Sigmoid colon (tissue), 7 donors: ENCODE measurements at regions of chr9 and their contacts with region 1.

Region 1: DNA sequence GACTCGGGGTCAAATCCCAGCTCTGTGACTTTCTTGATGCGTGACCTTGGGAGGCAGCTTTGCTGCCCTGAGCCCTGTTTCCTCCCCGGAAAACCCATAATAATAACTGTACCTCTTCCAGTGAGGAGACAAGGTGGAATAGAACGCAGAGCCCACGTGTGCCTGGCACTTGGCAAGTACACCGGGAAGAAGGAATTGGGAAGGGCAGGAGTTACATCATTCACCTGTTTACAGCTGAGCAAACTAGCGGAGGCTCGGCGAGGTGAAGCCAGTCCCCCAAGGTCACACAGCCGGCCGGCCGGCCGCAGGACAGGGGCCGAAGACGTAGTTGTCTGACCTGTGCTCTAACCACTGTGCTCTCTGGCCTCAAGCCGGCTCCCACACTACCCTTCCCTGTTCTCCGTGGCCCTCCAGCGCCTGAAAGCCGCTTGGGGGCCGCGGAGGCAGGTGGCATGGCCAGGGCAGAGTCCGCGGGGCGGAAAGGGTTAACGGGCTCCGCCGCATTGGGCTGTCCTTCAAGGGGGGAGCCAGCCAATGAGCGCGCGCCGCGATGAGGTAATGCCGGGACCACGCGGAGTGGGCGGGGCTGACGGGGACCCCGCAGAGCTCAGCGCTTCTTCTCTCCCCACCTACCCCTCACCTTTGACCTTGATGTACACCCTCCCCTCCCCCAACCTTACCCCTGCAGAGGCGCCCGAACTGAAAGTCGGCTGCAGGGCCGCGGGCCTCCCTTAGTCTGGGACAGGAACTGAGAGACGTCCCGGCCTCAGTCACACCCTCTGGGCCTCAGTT is 125.2 kb downstream of the C9orf50 start:
- DNase-seq: peak; percentile 97
- H3K4me3 ChIP-seq: peak overlapping the region; percentile 61 to 71 (median 62)
- H3K27ac ChIP-seq: peak overlapping the region; percentile 84 to 99 (median 99)
- H3K4me1 ChIP-seq: peaks cover 0 to 95% (median 78%) of the 10 kb centered on the region in 4 donors
- H3K27me3 ChIP-seq: no peaks in the 10 kb centered on the region
- CTCF ChIP-seq: no peak
- EP300 ChIP-seq: no peak
- POLR2A ChIP-seq: peak in 1 of 2 donors; percentile 42

Region 2: DNA sequence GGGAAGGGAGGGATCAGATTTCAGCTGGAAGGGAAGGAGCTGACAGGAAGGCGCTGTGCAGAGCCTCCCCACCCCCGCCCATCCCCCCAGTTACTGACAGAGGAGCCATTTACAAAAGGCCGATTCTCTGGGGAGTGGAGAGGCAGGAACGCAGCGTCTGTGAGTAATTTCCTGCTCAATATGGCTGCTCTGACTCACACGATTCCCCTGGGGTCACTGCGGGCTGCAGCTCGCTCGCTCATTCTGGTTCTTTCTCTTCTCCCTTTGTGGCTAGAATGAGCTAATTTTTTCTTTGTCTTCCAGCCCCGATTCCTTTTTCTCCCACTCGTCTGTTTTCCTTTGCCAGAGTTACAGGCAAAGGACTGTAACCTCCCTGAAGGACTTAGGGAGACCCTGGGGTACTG is 355.7 kb before region 1 on chr9:
- intact Hi-C with region 1: loop called (anchors 2 kb)
- DNase-seq: peak; percentile 98
- H3K4me3 ChIP-seq: peak overlapping the region; percentile 36 to 59 (median 50)
- H3K27ac ChIP-seq: peak overlapping the region; percentile 97 to 100 (median 99)
- H3K4me1 ChIP-seq: peaks cover 0 to 73% (median 64%) of the 10 kb centered on the region in 4 donors
- H3K27me3 ChIP-seq: no peaks in the 10 kb centered on the region
- CTCF ChIP-seq: no peak
- EP300 ChIP-seq: peak in 2 of 4 donors; percentile 71 to 76
- POLR2A ChIP-seq: peak; percentile 55 to 62

Region 3: DNA sequence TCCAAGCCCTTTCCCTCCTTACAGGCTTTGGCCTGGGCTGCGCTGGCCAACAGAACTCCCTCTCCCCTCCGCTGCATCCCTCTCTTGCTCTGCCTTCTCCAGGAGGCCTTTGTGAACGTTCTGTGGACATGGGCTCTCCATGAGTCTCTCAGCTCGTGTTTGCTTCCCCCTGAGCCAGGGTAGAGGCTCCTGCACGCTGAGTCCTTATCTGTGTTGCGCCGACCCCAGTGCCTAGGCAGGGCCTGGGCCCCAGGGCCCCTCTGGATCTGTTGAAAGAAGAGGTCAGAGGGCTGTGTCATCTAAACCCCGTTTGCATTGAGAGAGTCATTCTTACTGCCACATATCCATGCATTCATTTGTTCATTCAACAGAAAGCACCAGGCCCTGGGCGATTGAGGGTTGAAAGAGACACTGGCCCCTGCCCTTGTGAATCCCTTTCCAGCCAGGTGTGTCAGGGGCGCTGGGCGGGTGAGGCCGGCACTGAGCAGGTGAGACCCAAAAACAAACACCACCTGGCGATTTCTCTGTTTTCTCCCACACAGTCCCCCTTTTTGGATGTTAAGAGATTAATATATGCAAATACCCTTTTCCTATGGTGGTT is 206.5 kb before region 1 on chr9:
- intact Hi-C with region 1: no loop called
- DNase-seq: peak; percentile 43
- H3K4me3 ChIP-seq: no peak overlapping the region
- H3K27ac ChIP-seq: no peak overlapping the region
- H3K4me1 ChIP-seq: no peaks in the 10 kb centered on the region
- H3K27me3 ChIP-seq: no peaks in the 10 kb centered on the region
- CTCF ChIP-seq: no peak
- EP300 ChIP-seq: no peak
- POLR2A ChIP-seq: no peak

Region 4: GRCh38 chr9:129320575-129321263 is 175.0 kb before region 1 on chr9:
- intact Hi-C with region 1: loop called (anchors 5 kb)
- DNase-seq: peak; percentile 80
- H3K4me3 ChIP-seq: peak overlapping the region in 3 of 4 donors; percentile 32 to 51 (median 49)
- H3K27ac ChIP-seq: peak overlapping the region; percentile 75 to 87 (median 82)
- H3K4me1 ChIP-seq: peaks cover 0 to 49% (median 43%) of the 10 kb centered on the region in 4 donors
- H3K27me3 ChIP-seq: no peaks in the 10 kb centered on the region
- CTCF ChIP-seq: peak in 3 of 4 experiments; percentile 13 to 27 (median 23)
- EP300 ChIP-seq: no peak
- POLR2A ChIP-seq: peak in 1 of 2 donors; percentile 32

Region 5: GRCh38 chr9:129460323-129461261 is 35.1 kb before region 1 on chr9:
- intact Hi-C with region 1: loop called (anchors 5 kb)
- DNase-seq: peak; percentile 99
- H3K4me3 ChIP-seq: peak overlapping the region; percentile 19 to 46 (median 46)
- H3K27ac ChIP-seq: peak overlapping the region; percentile 95 to 100 (median 98)
- H3K4me1 ChIP-seq: peaks cover 0 to 68% (median 54%) of the 10 kb centered on the region in 4 donors
- H3K27me3 ChIP-seq: no peaks in the 10 kb centered on the region
- CTCF ChIP-seq: peak in 1 of 4 experiments; percentile 23
- EP300 ChIP-seq: peak in 2 of 4 donors; percentile 53 to 72
- POLR2A ChIP-seq: peak in 1 of 2 donors; percentile 42

Region 6: DNA sequence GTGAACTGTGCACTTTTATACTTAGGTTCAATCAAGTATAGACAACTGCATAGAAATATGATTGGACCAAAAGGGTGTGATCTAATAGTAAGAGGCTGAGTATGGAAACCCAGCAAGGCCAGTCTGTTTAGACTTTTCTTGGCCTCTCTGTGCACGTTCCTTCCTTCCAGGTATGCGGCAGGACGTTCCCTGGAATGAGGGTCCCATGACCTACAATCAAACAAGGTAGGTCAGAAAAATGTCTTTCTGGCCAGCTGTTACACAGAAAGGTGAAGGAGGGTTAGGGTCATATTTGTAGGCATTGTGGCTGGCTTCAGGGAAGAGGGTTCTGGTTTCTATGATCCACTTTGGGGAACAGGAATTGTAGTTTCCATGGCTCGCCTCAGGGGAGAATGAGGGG is 40.3 kb after region 1 on chr9:
- intact Hi-C with region 1: no loop called
- DNase-seq: peak; percentile 8
- H3K4me3 ChIP-seq: no peak overlapping the region
- H3K27ac ChIP-seq: no peak overlapping the region
- H3K4me1 ChIP-seq: no peaks in the 10 kb centered on the region
- H3K27me3 ChIP-seq: no peaks in the 10 kb centered on the region
- CTCF ChIP-seq: no peak
- EP300 ChIP-seq: no peak
- POLR2A ChIP-seq: no peak

Region 7: GRCh38 chr9:129569502-129570449 is 74.0 kb after region 1 on chr9:
- intact Hi-C with region 1: loop called (anchors 2 kb)
- DNase-seq: no peak
- H3K4me3 ChIP-seq: peak overlapping the region in 3 of 4 donors; percentile 58 to 74 (median 68)
- H3K27ac ChIP-seq: peak overlapping the region; percentile 76 to 87 (median 81)
- H3K4me1 ChIP-seq: peaks cover 0 to 40% (median 35%) of the 10 kb centered on the region in 4 donors
- H3K27me3 ChIP-seq: no peaks in the 10 kb centered on the region
- CTCF ChIP-seq: peak in 3 of 4 experiments; percentile 22 to 41 (median 28)
- EP300 ChIP-seq: no peak
- POLR2A ChIP-seq: no peak

Region 8: GRCh38 chr9:129746092-129746777 is 250.5 kb after region 1 on chr9:
- intact Hi-C with region 1: no loop called
- DNase-seq: no peak
- H3K4me3 ChIP-seq: no peak overlapping the region
- H3K27ac ChIP-seq: no peak overlapping the region
- H3K4me1 ChIP-seq: no peaks in the 10 kb centered on the region
- H3K27me3 ChIP-seq: no peaks in the 10 kb centered on the region
- CTCF ChIP-seq: no peak
- EP300 ChIP-seq: no peak
- POLR2A ChIP-seq: no peak